Naive thymus-derived CD4-positive, alpha-beta T cell (primary cell): ENCODE measurements at regions of chr6 and their contacts with region 1.

Region 1: GRCh38 chr6:36302227-36302976 is 32.5 kb downstream of the PNPLA1 start:
- DNase-seq: peak; percentile 74 to 92 (median 88)
- ATAC-seq: peak; percentile 100
- H3K4me3 ChIP-seq: no peak overlapping the region
- H3K4me3 Mint-ChIP-seq: no peak overlapping the region
- H3K27ac ChIP-seq: no peak overlapping the region
- H3K27ac Mint-ChIP-seq: peak overlapping the region in 4 of 9 donors; percentile 29 to 59 (median 48)
- H3K4me1 ChIP-seq: no peaks in the 10 kb centered on the region
- H3K4me1 Mint-ChIP-seq: peaks cover 0 to 8% (median 6%) of the 10 kb centered on the region in 7 donors
- H3K27me3 ChIP-seq: no peaks in the 10 kb centered on the region
- H3K27me3 Mint-ChIP-seq: peaks cover 0 to 29% (median 5%) of the 10 kb centered on the region in 5 donors

Region 2: GRCh38 chr6:36290661-36291620 is 11.5 kb before region 1 on chr6:
- CTCF ChIA-PET with region 1: interaction called, 14 read pairs
- POLR2A ChIA-PET with region 1: no interaction called
- intact Hi-C with region 1: no loop called
- DNase-seq: peak in 1 of 9 donors; percentile 19
- ATAC-seq: peak; percentile 87
- H3K4me3 ChIP-seq: no peak overlapping the region
- H3K4me3 Mint-ChIP-seq: no peak overlapping the region
- H3K27ac ChIP-seq: no peak overlapping the region
- H3K27ac Mint-ChIP-seq: peak overlapping the region in 1 of 9 donors; percentile 78
- H3K4me1 ChIP-seq: peaks cover 0 to 10% of the 10 kb centered on the region in 2 donors
- H3K4me1 Mint-ChIP-seq: peaks cover 5 to 13% (median 12%) of the 10 kb centered on the region in 7 donors
- H3K27me3 ChIP-seq: no peaks in the 10 kb centered on the region
- H3K27me3 Mint-ChIP-seq: peaks cover under 1 to 14% (median 1%) of the 10 kb centered on the region in 5 donors